Activated CD8-positive, alpha-beta T cell treated with anti-CD3 and anti-CD28 coated beads for 36 hours (primary cell): ENCODE measurements at regions of chr2 and their contacts with region 1.

Region 1: GRCh38 chr2:101697124-101698013 is at the start of gene MAP4K4:
- DNase-seq: peak; percentile 75
- ATAC-seq: peak; percentile 41
- H3K4me3 Mint-ChIP-seq: peak within 1 kb of the TSS; percentile 76
- H3K27ac Mint-ChIP-seq: peak within 1 kb of the TSS; percentile 80
- H3K4me1 Mint-ChIP-seq: peaks cover 25% of the 10 kb centered on the region
- H3K27me3 Mint-ChIP-seq: peaks cover 2% of the 10 kb centered on the region
- CTCF ChIP-seq: no peak
- total RNA-seq, gene MAP4K4: 26.3 to 27.3 TPM

Region 2: DNA sequence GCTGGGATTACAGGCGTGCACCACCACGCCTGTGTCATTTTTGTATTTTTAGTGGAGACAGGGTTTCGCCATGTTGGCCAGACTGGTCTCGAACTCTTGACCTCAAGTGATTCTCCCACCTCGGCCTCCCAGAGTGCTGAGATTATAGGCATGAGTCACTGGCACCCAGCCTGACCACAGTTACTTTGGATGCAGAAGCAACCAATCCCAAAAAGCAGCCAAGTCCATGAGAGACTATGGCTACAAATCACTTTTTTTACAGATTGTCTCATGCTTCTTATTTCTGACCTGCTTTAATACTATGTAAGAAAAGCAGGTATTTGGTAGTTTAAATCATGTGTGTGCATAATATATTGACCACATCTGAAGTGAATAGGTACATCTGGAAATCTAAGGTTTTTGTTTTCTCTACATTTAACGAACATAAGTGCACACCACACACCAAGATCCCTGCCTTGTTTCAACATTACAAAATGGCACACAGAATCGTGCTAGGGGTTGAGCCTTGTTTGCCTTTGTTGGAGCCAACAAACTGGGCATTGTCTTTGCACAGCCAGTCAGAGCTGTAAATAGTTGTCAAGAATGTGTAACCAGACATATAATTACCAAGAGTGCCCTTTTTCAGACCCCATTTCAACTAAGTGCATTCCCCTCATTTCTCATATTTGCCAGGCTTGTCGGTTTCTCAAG is 18.2 kb before region 1 on chr2:
- CTCF ChIA-PET with region 1: no interaction called
- POLR2A ChIA-PET with region 1: no interaction called
- intact Hi-C with region 1: no loop called
- DNase-seq: no peak
- ATAC-seq: no peak
- H3K4me3 Mint-ChIP-seq: no peak overlapping the region
- H3K27ac Mint-ChIP-seq: no peak overlapping the region
- H3K4me1 Mint-ChIP-seq: peaks cover 8% of the 10 kb centered on the region
- H3K27me3 Mint-ChIP-seq: no peaks in the 10 kb centered on the region
- CTCF ChIP-seq: no peak

Region 3: DNA sequence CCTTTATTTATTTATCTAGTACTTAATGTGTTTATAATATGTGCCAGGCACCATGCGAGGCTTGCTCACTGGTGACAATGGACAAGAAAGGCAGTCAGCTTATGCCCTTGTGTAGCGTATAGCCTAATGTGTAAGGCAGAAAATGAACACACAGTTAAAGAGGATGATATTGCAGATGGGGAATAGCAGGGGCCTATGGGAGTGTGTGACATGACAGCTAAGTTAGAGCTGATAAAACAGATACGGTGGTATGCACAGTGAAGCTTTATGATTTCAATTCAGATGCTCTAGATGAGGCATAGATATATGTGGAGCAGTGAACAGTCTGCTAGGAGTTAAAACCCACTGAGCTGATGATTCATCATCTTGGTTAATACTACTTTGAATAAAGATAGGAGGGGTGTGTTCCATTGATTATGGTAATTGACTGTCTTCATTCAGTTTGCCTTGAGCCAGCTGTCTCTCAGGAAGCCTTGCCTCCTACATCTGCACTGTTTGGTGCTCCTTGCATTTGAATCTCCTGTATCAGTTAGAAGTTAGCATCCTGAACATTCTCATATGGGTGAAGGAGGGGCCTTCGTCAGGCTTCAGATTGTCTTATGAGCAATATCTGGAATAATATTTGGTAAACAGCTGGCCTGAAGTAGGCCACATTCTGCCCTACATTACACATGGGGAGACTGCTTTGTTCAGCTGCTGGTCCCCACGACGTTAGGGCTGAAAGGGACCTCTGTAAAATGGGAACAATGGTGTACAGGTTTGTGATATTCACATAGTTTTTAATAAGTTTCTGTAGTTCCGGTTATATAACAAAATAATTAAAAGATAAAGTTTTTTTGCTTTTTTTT is 13.3 kb after region 1 on chr2:
- CTCF ChIA-PET with region 1: interaction called, 11 read pairs
- POLR2A ChIA-PET with region 1: interaction called, 3 read pairs
- intact Hi-C with region 1: no loop called
- DNase-seq: no peak
- ATAC-seq: peak; percentile 90
- H3K4me3 Mint-ChIP-seq: peak overlapping the region; percentile 3
- H3K27ac Mint-ChIP-seq: peak overlapping the region; percentile 65
- H3K4me1 Mint-ChIP-seq: peaks cover 62% of the 10 kb centered on the region
- H3K27me3 Mint-ChIP-seq: no peaks in the 10 kb centered on the region
- CTCF ChIP-seq: no peak